Caco-2 (cell line): ENCODE measurements at regions of chr20 and their contacts with region 1.

Region 1: DNA sequence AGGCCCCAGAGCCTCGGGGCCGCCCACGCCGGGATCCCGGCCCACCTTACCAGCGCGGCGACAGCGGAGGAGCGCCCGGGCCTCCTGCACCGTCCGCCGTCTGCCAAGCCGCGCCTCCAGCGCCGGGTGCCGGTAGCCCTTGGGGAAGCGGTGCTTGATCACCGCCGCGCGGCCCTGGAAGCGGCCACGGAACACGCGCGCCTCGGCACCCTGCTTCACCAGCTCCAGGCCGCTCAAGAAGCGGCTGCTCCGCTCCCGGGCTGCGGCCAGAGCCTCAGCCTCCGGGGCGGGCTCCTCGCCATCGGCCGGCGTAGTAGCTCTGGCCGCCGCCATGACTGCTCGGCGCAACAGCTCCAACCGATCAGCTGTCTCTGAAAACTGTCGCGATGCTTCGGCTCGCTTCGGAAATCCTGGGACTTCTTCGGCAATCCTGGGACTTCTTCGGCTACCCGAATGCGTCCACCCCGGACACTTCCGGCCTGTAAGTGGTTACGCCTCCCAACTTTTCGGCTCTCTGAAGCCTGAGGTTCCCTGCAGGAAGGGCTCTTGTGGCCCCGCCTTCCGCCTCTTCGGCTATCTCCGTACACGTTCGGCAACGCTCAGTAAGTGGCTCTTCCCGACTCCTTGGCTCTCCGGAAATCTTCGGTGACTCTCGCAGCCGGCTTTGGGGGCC is at the start of gene TP53RK:
- DNase-seq: peak; percentile 100
- H3K4me3 ChIP-seq: peak within 1 kb of the TSS; percentile 75
- H3K4me3 Mint-ChIP-seq: peak within 1 kb of the TSS; percentile 74
- H3K27ac Mint-ChIP-seq: peak within 1 kb of the TSS; percentile 51
- H3K4me1 ChIP-seq: peaks cover 17% of the 10 kb centered on the region
- H3K4me1 Mint-ChIP-seq: peaks cover 11% of the 10 kb centered on the region
- H3K27me3 ChIP-seq: no peaks in the 10 kb centered on the region
- H3K27me3 Mint-ChIP-seq: no peaks in the 10 kb centered on the region
- CTCF ChIP-seq: peak; percentile 19 to 43
- total RNA-seq, gene TP53RK: 20.3 and 22.7 TPM in 2 replicates

Region 2: DNA sequence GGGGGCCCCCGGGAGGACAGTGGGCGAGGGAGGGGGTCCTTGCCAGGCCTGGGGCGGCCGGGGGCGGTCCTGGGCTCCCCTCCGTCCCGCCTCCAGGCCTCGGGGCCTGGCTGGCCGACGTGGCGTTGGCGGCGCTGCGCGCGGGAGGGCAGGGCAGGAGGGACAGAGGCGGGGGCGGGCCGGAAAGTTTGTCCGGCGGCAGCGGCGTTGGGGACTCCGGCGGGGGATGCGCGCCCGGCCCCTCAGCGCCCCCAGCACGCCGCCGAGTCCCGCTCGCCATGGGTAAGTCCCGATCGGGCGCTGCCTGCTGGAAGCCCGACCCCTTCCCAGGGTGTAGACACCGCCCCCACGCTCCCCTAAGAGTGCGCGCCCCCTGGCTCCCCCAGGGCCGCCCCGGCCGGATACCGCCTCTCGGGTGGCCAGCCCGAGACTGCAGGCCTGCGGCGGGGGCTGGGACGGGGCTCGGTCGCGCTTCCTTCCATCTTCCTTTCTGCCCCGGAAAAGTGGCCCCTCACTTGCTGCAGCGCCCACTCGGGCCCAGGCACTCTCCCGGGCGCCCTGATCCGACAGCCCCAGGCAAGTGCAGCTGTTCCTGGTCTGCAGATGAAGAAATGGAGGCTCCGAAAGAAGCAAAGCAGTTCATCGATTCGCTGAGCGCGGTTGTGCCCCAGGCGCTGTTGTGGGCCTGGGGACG is 20.4 kb after region 1 on chr20 and contains the start of gene SLC2A10:
- CTCF ChIA-PET with region 1: interaction called, 4 read pairs
- POLR2A ChIA-PET with region 1: interaction called, 4 read pairs
- intact Hi-C with region 1: loop called (anchors 2 kb)
- DNase-seq: peak; percentile 77 to 81
- H3K4me3 ChIP-seq: peak within 1 kb of the TSS; percentile 69
- H3K4me3 Mint-ChIP-seq: peak within 1 kb of the TSS; percentile 79
- H3K27ac Mint-ChIP-seq: peak within 1 kb of the TSS; percentile 72
- H3K4me1 ChIP-seq: peaks cover 16% of the 10 kb centered on the region
- H3K4me1 Mint-ChIP-seq: peaks cover 21% of the 10 kb centered on the region
- H3K27me3 ChIP-seq: no peaks in the 10 kb centered on the region
- H3K27me3 Mint-ChIP-seq: no peaks in the 10 kb centered on the region
- CTCF ChIP-seq: peak in 1 of 2 experiments; percentile 33
- total RNA-seq, gene SLC2A10: 4.2 and 4.3 TPM in 2 replicates

Region 3: DNA sequence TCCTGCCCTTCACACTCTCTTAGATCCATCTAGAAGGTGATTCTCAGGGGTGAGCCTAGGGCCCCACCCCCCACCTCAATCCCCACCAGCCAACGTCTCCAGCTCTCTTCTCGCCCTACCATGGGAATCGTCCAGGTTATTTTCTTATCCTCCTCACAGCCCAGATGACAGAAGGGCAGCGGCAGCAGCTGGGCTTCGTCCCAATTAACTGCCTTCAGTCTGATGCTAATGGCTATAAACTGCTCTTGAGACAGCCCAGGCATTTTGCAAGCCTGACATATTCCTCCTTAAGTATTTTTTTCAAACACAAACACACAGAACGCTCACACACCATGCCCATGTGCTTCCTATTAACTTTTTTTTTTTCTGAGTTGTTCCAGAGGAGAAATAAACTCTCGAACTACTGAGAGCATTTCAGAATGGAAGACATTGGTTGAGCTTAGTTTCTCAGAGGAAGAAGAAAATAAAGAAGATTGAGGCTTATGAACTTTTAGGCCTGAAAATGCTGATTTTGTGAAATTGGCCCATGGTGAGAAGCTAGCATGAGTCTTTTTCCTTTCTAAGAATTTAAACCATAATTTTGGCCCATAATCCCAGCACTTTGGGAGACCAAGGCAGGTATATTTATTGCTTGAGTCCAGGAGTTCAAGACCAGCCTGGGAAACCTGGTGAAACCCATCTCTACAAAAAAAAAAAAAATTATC is 330.1 kb after region 1 on chr20:
- CTCF ChIA-PET with region 1: no interaction called
- POLR2A ChIA-PET with region 1: no interaction called
- intact Hi-C with region 1: no loop called
- DNase-seq: no peak
- H3K4me3 ChIP-seq: no peak overlapping the region
- H3K4me3 Mint-ChIP-seq: no peak overlapping the region
- H3K27ac Mint-ChIP-seq: no peak overlapping the region
- H3K4me1 ChIP-seq: no peaks in the 10 kb centered on the region
- H3K4me1 Mint-ChIP-seq: no peaks in the 10 kb centered on the region
- H3K27me3 ChIP-seq: no peaks in the 10 kb centered on the region; the same call in 1 of the 2 replicates
- H3K27me3 Mint-ChIP-seq: peaks cover 30% of the 10 kb centered on the region
- CTCF ChIP-seq: no peak